Adrenal gland (tissue), 19 donors: ENCODE measurements at regions of chr12 and their contacts with region 1.

Region 1: DNA sequence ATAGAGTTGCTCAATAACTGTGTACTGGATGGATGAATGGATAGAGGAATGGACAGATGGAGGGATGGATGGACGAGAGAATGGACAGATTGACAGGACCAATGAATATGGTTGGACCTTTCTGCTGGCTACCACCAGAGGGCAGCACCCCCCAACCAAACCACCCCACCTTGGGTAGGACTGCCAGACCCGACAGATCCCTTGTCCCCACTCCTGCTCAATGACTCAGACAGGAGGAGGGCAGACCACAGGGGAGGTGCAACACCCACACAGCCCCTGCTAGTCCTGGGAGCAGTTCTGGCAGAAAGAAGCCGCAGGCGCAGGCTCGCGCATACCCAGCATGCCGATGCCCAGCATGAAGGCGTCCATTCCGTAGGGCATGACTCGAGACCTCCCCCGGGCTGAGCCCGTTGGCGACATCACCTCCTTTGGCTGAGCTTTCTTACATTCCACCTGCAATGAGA is 12.4 kb downstream of the MSI1 start:
- DNase-seq: peak; percentile 82 to 95 (median 89)
- H3K4me3 ChIP-seq: no peak overlapping the region
- H3K27ac ChIP-seq: no peak overlapping the region
- H3K4me1 ChIP-seq: peaks cover 2 to 4% of the 10 kb centered on the region in 2 donors
- H3K27me3 ChIP-seq: no peaks in the 10 kb centered on the region
- CTCF ChIP-seq: peak; percentile 84 to 97 (median 96)
- POLR2A ChIP-seq: no peak

Region 2: DNA sequence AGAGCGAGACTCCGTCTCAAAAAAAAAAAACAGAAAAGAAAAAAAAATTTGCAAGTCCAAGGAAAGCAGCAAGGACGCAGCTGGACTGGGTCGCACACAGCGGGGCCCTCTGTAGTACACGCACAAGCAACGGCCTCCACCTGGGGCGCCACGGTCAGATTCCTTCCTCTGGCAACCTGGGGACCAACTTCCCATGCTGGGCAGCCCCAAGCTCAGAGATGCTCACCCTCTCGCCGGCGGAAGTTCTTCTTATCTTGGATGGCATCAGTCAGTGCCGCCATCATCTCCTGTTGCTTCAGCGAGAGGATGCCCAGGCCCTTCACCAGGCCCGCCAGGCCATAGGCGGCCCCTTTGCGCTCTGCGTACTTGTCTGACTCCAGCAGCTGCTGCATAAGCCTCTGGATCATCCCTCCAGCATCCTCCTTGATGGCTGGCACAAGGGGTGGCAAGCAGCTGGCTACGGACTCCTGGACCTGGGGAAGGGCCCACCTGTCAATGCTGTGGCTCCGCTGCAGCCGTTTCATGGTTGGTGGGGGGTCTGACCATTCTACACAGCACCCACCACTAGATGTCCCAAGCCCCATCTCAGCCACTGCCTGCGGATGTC is 205.6 kb before region 1 on chr12:
- intact Hi-C with region 1: no loop called
- DNase-seq: no peak
- H3K4me3 ChIP-seq: no peak overlapping the region
- H3K27ac ChIP-seq: no peak overlapping the region
- H3K4me1 ChIP-seq: no peaks in the 10 kb centered on the region
- H3K27me3 ChIP-seq: no peaks in the 10 kb centered on the region
- CTCF ChIP-seq: no peak
- POLR2A ChIP-seq: no peak

Region 3: GRCh38 chr12:120432772-120433525 is 76.3 kb after region 1 on chr12:
- intact Hi-C with region 1: loop called (anchors 2 kb)
- DNase-seq: no peak
- H3K4me3 ChIP-seq: no peak overlapping the region
- H3K27ac ChIP-seq: no peak overlapping the region
- H3K4me1 ChIP-seq: peaks cover 0 to 4% of the 10 kb centered on the region in 2 donors
- H3K27me3 ChIP-seq: no peaks in the 10 kb centered on the region
- CTCF ChIP-seq: no peak
- POLR2A ChIP-seq: no peak